OCI-LY7 (cell line): ENCODE measurements at regions of chr2 and their contacts with region 1.

Region 1: GRCh38 chr2:219245148-219245898 is at the starts of genes GLB1L and STK16:
- DNase-seq: peak; percentile 94
- H3K4me3 ChIP-seq: peak within 1 kb of the TSS; percentile 84
- H3K27ac ChIP-seq: peak within 1 kb of the TSS; percentile 96
- H3K4me1 ChIP-seq: peaks cover 54% of the 10 kb centered on the region
- CTCF ChIP-seq: no peak
- total RNA-seq, gene GLB1L: 2.7 and 8.6 TPM in 2 replicates
- total RNA-seq, gene STK16: 19.6 and 23.4 TPM in 2 replicates

Region 2: DNA sequence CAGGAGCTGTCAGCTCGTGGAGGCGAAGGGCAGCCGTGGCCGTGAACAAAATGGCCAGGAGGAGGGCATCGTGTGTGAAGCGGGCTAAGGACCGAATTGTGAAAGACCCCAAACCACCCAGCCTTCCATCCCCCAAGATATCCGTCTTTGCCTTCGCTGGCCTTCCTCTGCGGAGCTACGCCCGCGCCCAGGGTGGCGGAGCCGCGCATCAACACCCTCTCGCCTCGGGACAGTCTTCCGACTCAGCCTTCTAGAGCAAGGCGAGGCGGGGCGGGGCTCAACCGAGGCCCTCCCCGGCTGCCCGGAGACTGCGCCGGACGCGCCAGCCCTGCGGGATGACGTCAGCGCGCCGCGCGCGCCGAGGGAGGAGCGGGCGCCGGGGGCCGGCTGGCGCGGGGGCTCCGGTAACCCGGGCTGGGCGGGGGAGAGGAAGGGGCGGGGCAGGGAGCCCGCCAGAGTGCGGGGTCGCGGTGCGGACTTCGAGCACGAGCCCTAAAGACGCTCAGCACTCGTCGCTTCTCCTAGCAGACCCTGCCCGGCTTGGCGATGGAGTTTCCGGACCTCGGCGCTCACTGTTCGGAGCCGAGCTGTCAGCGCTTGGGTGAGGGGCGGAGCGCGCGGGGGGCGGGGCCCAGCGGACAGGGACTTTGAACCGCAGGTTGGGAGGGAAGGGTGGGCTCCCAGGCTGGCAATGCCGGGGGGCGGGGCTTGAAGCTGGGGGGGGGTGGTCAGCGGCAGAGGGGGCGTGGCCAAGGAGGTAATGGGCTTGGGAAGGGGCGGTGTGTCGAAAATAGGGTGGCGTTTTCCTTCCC is 38.7 kb before region 1 on chr2 and contains the start of gene ZFAND2B:
- CTCF ChIA-PET with region 1: no interaction called
- POLR2A ChIA-PET with region 1: interaction called, 18 read pairs
- intact Hi-C with region 1: loop called (anchors 1 kb)
- DNase-seq: peak; percentile 97
- H3K4me3 ChIP-seq: peak within 1 kb of the TSS; percentile 69
- H3K27ac ChIP-seq: peak within 1 kb of the TSS; percentile 76
- H3K4me1 ChIP-seq: peaks cover 17% of the 10 kb centered on the region
- CTCF ChIP-seq: no peak
- total RNA-seq, gene ZFAND2B: 42.4 and 51.6 TPM in 2 replicates

Region 3: GRCh38 chr2:219229305-219230058 is 15.8 kb before region 1 on chr2 and contains the starts of genes ANKZF1 and ATG9A:
- CTCF ChIA-PET with region 1: interaction called, 4 read pairs
- POLR2A ChIA-PET with region 1: interaction called, 28 read pairs
- intact Hi-C with region 1: loop called (anchors 1 kb)
- DNase-seq: peak; percentile 99
- H3K4me3 ChIP-seq: peak within 1 kb of the TSS; percentile 87
- H3K27ac ChIP-seq: peak within 1 kb of the TSS; percentile 76
- H3K4me1 ChIP-seq: peaks cover 16% of the 10 kb centered on the region
- CTCF ChIP-seq: no peak
- total RNA-seq, gene ANKZF1: 57.8 and 91.0 TPM in 2 replicates
- total RNA-seq, gene ATG9A: 22.2 and 27.7 TPM in 2 replicates

Region 4: DNA sequence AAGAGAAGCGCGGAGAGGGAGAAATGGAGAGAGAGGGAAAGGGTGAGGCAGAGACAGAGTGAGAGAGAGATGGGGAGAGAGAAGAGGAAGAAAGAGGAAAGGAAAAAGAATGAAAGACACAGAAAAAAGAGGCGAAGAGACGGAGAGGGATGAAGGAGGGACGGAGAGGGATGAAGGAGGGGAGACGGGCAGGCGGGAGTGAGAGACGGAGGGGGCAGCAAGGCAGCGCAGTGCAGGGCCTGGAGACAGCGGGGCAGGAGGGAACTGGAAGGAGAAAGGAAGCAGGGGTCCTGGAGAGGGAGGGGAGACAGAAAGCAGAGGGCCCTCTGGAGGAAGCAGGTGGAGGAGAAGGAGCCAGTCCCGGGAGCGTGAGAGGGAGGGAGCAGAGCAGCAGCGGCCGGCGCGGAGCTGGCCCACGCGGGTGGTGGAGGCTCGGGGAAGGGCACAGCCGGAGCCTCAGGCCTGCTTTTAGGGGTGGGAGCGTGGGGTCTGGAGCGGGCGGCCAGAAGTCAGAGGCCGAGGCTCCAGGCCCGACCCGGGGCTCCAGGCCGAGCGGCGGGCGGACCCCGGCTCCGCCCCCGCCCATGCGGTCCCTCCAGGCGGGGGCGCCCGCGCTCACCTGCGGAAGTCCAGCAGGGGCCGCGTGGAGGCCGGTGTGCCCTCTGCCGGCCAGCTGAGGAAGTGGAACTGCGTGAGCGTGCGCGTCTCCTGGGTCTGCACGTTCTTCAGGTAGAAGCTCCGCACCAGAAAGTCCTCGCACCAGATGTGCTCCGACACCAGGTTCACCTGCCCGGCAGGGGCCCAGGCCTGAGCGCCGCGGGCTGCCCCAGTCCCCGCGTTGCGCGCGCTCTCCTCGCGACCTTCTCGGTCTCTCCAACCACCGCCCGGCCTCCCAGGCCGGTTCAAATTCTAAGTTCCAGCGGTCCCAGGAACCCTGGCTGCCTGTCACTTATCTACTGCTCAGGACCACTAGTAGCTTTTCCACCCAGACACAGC is 49.3 kb after region 1 on chr2:
- CTCF ChIA-PET with region 1: interaction called, 13 read pairs
- POLR2A ChIA-PET with region 1: interaction called, 13 read pairs
- intact Hi-C with region 1: no loop called
- DNase-seq: peak; percentile 92
- H3K4me3 ChIP-seq: peak overlapping the region; percentile 64
- H3K27ac ChIP-seq: no peak overlapping the region
- H3K4me1 ChIP-seq: peaks cover 21% of the 10 kb centered on the region
- CTCF ChIP-seq: peak; percentile 97

Region 5: DNA sequence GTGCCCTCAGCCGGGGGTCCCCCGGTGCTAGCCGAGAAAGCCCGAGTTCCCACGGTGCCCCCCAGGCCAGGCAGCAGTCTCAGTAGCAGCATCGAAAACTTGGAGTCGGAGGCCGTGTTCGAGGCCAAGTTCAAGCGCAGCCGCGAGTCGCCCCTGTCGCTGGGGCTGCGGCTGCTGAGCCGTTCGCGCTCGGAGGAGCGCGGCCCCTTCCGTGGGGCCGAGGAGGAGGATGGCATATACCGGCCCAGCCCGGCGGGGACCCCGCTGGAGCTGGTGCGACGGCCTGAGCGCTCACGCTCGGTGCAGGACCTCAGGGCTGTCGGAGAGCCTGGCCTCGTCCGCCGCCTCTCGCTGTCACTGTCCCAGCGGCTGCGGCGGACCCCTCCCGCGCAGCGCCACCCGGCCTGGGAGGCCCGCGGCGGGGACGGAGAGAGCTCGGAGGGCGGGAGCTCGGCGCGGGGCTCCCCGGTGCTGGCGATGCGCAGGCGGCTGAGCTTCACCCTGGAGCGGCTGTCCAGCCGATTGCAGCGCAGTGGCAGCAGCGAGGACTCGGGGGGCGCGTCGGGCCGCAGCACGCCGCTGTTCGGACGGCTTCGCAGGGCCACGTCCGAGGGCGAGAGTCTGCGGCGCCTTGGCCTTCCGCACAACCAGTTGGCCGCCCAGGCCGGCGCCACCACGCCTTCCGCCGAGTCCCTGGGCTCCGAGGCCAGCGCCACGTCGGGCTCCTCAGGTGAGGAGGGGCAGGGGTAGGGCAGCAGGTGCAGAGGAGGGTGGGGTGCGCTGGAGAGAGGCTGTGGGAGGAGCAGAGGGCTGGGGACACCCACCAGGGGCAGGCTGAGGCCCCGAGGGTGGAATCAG is 239.2 kb after region 1 on chr2:
- CTCF ChIA-PET with region 1: interaction called, 10 read pairs
- POLR2A ChIA-PET with region 1: no interaction called
- intact Hi-C with region 1: no loop called
- DNase-seq: no peak
- H3K4me3 ChIP-seq: no peak overlapping the region
- H3K27ac ChIP-seq: no peak overlapping the region
- H3K4me1 ChIP-seq: no peaks in the 10 kb centered on the region
- CTCF ChIP-seq: no peak

Region 6: DNA sequence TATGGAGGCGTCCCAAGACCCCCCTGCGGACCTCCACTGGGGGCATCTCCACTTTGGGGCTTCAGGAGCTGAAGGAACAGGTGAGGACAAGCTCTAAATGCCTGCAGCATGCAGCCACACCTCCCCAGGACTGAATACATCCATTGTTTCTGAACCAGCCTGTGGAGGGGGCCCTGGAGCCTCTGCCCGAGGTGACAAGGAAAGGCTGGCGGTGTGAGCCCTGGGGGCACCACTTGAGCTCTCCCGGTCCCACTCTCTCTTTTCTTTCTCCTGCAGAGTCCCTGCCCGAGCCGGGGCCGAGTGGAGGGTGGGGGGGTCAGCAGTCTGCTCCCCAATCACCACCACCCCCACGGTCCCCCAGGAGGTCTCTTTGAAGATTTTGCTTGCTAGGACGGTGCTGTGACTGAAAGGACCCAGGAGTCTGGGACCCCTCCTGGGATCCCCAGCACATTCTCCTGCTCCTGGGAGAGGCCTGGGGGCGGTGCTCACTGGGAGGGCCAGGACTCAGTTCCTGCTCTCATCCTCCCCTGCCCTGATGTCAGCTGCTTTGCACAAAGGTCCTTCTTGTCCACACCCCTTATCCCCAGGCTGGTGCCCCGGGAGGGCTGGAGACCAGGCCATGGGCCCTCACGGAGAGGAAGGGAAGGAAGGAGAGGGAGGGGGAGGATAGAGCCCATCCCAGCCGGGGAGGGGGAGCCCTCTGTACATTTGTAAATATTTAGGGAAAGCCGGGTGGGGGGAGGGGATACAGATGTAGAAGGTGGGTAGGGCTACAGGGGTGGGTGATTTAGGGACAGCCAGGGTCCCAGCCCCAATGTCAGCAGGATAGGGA is 292.6 kb after region 1 on chr2:
- CTCF ChIA-PET with region 1: no interaction called
- POLR2A ChIA-PET with region 1: no interaction called
- intact Hi-C with region 1: no loop called
- DNase-seq: no peak
- H3K4me3 ChIP-seq: no peak overlapping the region
- H3K27ac ChIP-seq: no peak overlapping the region
- H3K4me1 ChIP-seq: no peaks in the 10 kb centered on the region
- CTCF ChIP-seq: no peak